HepG2 (cell line): ENCODE measurements at regions of chr2 and their contacts with region 1.

Region 1: GRCh38 chr2:168246483-168247340 is 683 bp downstream of the STK39 start:
- DNase-seq: peak; percentile 31
- ATAC-seq: peak; percentile 81
- H3K4me3 ChIP-seq: peak overlapping the region; percentile 65 to 94 (median 81)
- H3K27ac ChIP-seq: peak overlapping the region; percentile 74
- H3K4me1 ChIP-seq: peaks cover 52% of the 10 kb centered on the region
- H3K27me3 ChIP-seq: no peaks in the 10 kb centered on the region
- CTCF ChIP-seq: peak; percentile 70
- EP300 ChIP-seq: no peak
- POLR2A ChIP-seq: no peak
- RAD21 ChIP-seq: peak; percentile 79

Region 2: DNA sequence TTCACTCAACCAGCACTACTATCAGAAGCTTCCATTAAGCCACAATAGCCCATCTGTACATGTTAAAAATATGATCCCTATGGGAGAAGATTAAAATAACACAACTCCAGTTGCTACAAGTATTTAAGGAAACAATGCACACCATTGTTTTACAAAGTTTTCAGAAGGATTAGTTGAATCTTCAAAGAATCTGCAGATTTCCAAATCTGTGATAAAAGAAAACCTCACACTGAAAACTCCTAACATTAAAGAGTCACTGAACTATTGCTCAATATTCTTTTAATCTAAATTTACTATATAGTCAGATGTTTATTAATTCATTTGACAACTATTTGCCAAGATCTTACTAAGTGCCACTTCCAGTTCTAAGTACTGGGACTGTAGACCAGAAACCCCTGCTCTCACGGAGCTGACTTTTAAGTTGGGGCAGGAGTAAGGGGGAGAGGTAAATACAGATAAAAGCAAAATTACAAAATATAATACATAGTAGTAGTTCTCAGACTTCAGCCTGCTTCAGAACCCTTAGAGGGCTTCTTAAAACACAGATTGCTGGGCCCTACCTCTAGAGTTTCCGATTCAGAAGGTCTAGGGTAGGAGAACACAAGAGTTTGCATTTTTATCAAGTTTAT is 93.7 kb before region 1 on chr2:
- CTCF ChIA-PET with region 1: no interaction called
- POLR2A ChIA-PET with region 1: no interaction called
- in situ Hi-C with region 1: loop called (anchors 5 kb)
- intact Hi-C with region 1: no loop called
- DNase-seq: peak; percentile 75
- ATAC-seq: no peak
- H3K4me3 ChIP-seq: no peak overlapping the region
- H3K27ac ChIP-seq: peak overlapping the region; percentile 49
- H3K4me1 ChIP-seq: peaks cover 73% of the 10 kb centered on the region
- H3K27me3 ChIP-seq: no peaks in the 10 kb centered on the region
- CTCF ChIP-seq: no peak
- EP300 ChIP-seq: peak in 1 of 2 experiments; percentile 62; a peak in 2 of 4 replicates
- POLR2A ChIP-seq: no peak
- RAD21 ChIP-seq: no peak

Region 3: GRCh38 chr2:168166902-168167510 is 79.7 kb before region 1 on chr2:
- CTCF ChIA-PET with region 1: no interaction called
- POLR2A ChIA-PET with region 1: no interaction called
- in situ Hi-C with region 1: no loop called
- intact Hi-C with region 1: loop called (anchors 2 kb)
- DNase-seq: peak; percentile 88
- ATAC-seq: peak; percentile 91
- H3K4me3 ChIP-seq: no peak overlapping the region; a peak in 1 of 6 replicates
- H3K27ac ChIP-seq: peak overlapping the region; percentile 80
- H3K4me1 ChIP-seq: peaks cover 59% of the 10 kb centered on the region
- H3K27me3 ChIP-seq: no peaks in the 10 kb centered on the region
- CTCF ChIP-seq: no peak
- EP300 ChIP-seq: peak in 1 of 2 experiments; percentile 94; a peak in 2 of 4 replicates
- POLR2A ChIP-seq: no peak
- RAD21 ChIP-seq: no peak

Region 4: GRCh38 chr2:168194784-168195522 is 51.8 kb before region 1 on chr2:
- CTCF ChIA-PET with region 1: no interaction called
- POLR2A ChIA-PET with region 1: interaction called, 4 read pairs
- in situ Hi-C with region 1: no loop called
- intact Hi-C with region 1: loop called (anchors 2 kb)
- DNase-seq: no peak
- ATAC-seq: no peak
- H3K4me3 ChIP-seq: no peak overlapping the region
- H3K27ac ChIP-seq: no peak overlapping the region
- H3K4me1 ChIP-seq: peaks cover 96% of the 10 kb centered on the region
- H3K27me3 ChIP-seq: no peaks in the 10 kb centered on the region
- CTCF ChIP-seq: no peak
- EP300 ChIP-seq: no peak
- POLR2A ChIP-seq: no peak
- RAD21 ChIP-seq: no peak

Region 5: GRCh38 chr2:168272225-168272624 is 25.5 kb after region 1 on chr2:
- CTCF ChIA-PET with region 1: no interaction called
- POLR2A ChIA-PET with region 1: no interaction called
- in situ Hi-C with region 1: no loop called
- intact Hi-C with region 1: loop called (anchors 1 kb)
- DNase-seq: peak; percentile 97
- ATAC-seq: peak; percentile 97
- H3K4me3 ChIP-seq: no peak overlapping the region
- H3K27ac ChIP-seq: no peak overlapping the region
- H3K4me1 ChIP-seq: peaks cover 6% of the 10 kb centered on the region
- H3K27me3 ChIP-seq: no peaks in the 10 kb centered on the region
- CTCF ChIP-seq: no peak
- EP300 ChIP-seq: peak; percentile 39 to 82; a peak in 3 of 4 replicates
- POLR2A ChIP-seq: no peak
- RAD21 ChIP-seq: no peak

Region 6: GRCh38 chr2:168336864-168337263 is 90.2 kb after region 1 on chr2:
- CTCF ChIA-PET with region 1: no interaction called
- POLR2A ChIA-PET with region 1: no interaction called
- in situ Hi-C with region 1: no loop called
- intact Hi-C with region 1: loop called (anchors 1 kb)
- DNase-seq: peak; percentile 69
- ATAC-seq: peak; percentile 99
- H3K4me3 ChIP-seq: no peak overlapping the region
- H3K27ac ChIP-seq: no peak overlapping the region
- H3K4me1 ChIP-seq: peaks cover 5% of the 10 kb centered on the region; the same call in 1 of the 2 replicates
- H3K27me3 ChIP-seq: peaks cover 1 to 10% of the 10 kb centered on the region in 2 experiments; a peak in 2 of 5 replicates
- CTCF ChIP-seq: peak; percentile 88
- EP300 ChIP-seq: no peak
- POLR2A ChIP-seq: no peak
- RAD21 ChIP-seq: peak; percentile 81